ENCODE measurements at regions of chr13 and their contacts with region 1.

Region 1: DNA sequence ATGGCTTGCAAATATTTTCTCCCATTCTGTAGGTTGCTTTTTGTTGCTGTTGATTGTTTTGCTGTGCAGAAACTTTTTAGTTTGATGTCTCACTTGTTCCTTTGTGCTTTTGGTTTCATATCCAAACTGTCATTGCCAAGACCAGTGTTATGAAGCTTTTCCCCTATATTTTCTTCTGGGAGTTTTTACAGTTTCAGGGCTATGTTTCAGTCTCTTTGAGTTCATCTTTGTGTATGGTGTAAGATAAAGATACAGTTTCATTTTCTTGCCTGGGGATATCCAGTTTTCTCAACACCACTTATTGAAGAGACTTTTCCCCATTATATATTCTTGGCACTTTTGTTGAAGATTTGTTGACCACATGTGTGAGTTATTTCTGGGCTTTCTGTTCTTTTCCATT is 139.9 kb downstream of the MRPL57 start:
- DNase-seq: no peak
- H3K4me3 Mint-ChIP-seq: no peak overlapping the region
- H3K27ac Mint-ChIP-seq: peak overlapping the region; percentile 77
- H3K4me1 Mint-ChIP-seq: peaks cover 12% of the 10 kb centered on the region
- H3K27me3 Mint-ChIP-seq: no peaks in the 10 kb centered on the region

Region 2: GRCh38 chr13:21328836-21329477 is 12.6 kb after region 1 on chr13:
- intact Hi-C with region 1: loop called (anchors 1 kb)
- DNase-seq: no peak
- H3K4me3 Mint-ChIP-seq: peak overlapping the region; percentile 22
- H3K27ac Mint-ChIP-seq: peak overlapping the region; percentile 29
- H3K4me1 Mint-ChIP-seq: peaks cover 48% of the 10 kb centered on the region
- H3K27me3 Mint-ChIP-seq: no peaks in the 10 kb centered on the region

Region 3: DNA sequence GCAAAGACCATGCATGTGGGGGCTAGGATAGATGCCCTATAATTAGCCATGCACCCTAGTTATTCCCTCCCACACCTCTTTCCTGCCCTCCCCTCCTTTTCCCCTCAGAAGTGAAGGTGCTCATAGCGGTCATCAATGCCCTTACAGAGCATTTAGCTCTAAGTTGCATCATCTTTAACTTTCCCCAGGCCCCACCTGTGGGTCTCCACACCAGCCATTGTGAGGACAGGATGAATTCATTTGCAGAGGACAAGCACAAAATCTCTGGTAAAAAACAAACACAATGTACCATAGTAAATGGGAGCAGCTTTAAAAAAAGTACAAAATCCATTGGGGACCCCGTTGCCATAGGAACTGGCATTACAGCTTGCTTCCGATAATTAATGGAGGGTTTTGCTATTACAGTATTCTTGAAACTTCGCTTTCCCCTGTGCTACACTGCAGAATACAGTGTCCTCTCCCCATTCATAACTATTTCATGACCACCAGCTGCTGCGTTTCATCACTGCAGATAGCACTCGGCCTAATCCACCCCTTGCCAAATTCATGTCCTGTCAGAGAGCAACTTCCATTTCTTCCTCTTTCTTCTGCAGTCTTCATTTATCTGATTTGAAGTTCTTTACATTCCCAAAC is 32.2 kb after region 1 on chr13:
- intact Hi-C with region 1: no loop called
- DNase-seq: no peak
- H3K4me3 Mint-ChIP-seq: no peak overlapping the region
- H3K27ac Mint-ChIP-seq: no peak overlapping the region
- H3K4me1 Mint-ChIP-seq: peaks cover 14% of the 10 kb centered on the region
- H3K27me3 Mint-ChIP-seq: no peaks in the 10 kb centered on the region

Measured in activated T-helper 2 cell treated with anti-CD3 and anti-CD28 coated beads, Interferon-gamma antibody, Interleukin-2, Interleukin-4, amounts not matched to agents 10 μg/mL and 5 μg/mL and 100 μg/mL, durations not matched to agents 14 hours and 24 hours and 36 hours (primary cell).